ENCODE measurements at regions of chr19 and their contacts with region 1.

Region 1: GRCh38 chr19:12965017-12965811 is 4.2 kb upstream of the DAND5 start:
- DNase-seq: peak; percentile 88
- CTCF ChIP-seq: peak; percentile 99

Region 2: DNA sequence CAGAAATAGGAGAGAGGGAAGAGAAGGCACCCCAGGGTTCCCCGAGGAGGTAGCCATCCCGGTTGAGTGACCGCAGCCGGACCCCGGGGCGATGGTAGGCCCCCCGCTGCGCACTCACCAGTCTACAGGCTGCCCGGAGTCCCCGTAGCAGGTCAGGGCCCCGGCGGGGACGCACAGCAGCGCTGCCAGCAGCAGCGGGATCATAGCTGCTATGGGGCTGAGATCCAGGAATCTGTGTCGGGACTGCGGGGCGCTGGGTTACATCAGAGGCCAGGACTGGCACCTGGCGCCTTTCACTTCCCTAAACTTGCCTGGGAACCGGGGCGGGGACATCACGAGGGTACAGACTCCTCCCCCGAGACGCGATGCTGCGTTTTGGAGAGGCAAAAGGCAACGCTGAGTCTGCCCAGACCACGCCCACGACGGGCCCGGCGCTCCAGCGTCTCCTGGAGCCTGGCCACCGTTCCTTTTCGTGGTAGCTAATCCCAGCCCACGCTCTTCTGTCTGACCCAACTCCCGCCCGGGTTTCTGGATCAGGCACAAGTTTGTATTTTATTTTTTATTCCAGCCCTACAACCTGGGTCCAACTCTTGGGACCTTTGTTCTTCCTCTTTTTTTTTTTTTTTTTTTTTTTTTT is 83.9 kb before region 1 on chr19 and contains the start of gene DNASE2:
- CTCF ChIA-PET with region 1: interaction called, 36 read pairs
- POLR2A ChIA-PET with region 1: no interaction called
- DNase-seq: peak; percentile 97
- CTCF ChIP-seq: no peak

Region 3: GRCh38 chr19:12913011-12913561 is 52.1 kb before region 1 on chr19:
- CTCF ChIA-PET with region 1: interaction called, 13 read pairs
- POLR2A ChIA-PET with region 1: interaction called, 7 read pairs
- DNase-seq: no peak
- CTCF ChIP-seq: no peak

Region 4: DNA sequence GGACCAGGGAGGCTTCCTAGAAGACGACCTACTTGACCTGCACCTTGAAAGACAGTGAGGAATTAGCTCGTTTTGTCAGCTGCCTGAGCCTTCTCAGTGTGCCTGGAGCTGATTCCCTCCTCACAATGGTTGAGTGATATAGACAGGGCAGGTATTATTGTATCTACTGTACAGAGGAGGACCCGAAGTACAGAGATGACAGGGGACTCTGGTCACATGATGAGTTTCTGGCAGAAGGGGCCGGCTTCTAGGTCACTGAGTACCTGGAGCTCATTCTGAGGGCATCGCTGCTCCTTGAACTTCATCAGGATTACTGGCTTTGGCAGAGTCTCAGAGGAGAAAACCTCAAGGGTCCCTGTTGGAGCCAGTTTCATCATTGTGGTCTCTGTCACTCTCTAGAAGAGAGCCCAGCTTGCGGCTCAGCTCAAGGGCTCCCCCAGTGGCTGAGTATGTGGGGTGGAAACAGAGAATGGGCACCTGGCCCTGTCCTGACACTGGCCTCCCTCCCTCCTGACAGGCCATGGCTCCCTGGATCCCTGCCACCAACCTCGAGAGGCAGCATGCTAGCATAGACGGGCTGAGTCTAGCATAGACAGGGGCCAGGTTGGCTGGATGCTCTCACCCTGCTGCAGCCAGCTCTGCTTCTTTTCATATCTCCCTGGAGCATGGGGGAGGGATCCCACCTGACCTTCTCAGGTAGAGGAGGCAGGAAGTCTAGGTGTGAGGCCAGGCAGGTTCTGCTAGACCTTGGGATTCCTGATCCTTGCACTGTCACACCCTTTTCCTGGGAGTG is 68.8 kb after region 1 on chr19:
- CTCF ChIA-PET with region 1: interaction called, 21 read pairs
- POLR2A ChIA-PET with region 1: no interaction called
- DNase-seq: peak; percentile 79
- CTCF ChIP-seq: peak; percentile 69

Region 5: DNA sequence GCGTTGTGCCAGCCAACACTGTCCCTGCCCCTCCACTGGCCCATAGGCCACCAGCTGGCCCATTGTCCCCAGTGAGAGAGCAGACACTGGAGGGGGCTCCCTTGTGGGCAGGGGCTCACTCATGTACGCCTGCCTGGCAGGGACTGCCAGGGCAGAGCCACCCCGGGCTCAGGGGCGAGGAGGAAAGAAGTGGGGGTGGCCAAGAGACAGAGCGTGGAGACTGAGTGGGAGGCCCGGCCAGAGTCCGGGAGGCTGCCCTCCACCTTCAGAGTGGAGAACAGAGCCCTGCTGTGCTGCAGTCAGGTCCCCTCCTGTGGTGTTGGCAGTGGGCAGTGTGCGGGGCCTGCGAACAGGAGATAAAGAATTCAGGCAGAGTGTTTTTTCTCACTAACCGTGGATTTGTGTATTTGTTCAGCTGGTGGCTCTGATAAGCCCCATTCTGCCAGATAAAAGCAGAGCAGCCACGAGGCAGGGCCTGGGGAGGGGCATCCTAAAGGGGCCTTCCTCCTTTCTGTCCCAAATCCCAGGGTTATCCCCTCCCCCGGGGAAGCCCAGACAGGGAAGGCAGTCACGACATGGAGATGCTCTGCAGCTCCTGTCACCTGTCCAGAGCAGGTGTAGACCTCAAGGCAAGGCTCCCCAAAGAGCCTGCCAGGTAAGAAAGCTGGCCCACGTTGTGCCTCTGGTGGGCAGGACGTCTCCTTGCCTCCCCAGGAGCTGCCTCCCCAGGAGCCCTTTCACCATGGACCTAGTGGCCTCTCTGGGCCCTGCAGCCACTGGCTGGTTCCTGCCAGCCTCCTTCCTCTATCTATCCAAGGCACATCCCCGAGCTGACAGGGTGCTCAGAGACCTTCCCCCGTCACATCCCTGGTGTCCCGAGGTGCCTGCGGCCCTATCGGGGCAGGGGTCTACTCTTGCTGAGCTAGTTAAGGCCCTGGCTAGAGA is 104.5 kb after region 1 on chr19:
- CTCF ChIA-PET with region 1: interaction called, 109 read pairs
- POLR2A ChIA-PET with region 1: no interaction called
- DNase-seq: no peak
- CTCF ChIP-seq: no peak

Region 6: DNA sequence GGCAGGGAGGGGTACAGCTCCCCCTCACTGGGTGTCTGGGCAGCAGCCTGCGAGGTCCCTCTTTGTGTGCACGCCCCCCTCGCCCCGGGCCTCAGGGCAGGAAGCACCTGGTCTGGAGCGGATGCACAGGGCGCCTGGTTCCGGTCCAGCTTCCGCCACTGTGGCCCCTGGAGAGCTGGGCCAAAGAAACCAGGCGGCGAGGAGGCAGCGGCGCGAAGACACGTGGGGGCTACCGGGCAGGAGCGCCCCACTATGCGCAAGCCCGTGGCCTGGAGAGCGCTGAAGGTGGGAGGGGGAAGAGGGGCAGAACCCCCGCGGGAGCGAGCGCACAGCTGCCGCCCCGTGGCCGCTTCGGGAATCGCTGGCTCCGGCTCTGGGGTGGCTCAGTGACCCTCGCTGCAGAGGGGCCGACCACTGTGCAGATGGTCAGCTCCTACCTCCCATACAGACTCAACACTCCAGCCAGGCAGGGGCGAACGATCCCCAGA is 139.2 kb after region 1 on chr19:
- CTCF ChIA-PET with region 1: interaction called, 22 read pairs
- POLR2A ChIA-PET with region 1: no interaction called
- DNase-seq: peak; percentile 85
- CTCF ChIP-seq: peak; percentile 90

Measured in GM10248 (cell line).